SK-N-SH (cell line): ENCODE measurements at regions of chr14 and their contacts with region 1.

Region 1: DNA sequence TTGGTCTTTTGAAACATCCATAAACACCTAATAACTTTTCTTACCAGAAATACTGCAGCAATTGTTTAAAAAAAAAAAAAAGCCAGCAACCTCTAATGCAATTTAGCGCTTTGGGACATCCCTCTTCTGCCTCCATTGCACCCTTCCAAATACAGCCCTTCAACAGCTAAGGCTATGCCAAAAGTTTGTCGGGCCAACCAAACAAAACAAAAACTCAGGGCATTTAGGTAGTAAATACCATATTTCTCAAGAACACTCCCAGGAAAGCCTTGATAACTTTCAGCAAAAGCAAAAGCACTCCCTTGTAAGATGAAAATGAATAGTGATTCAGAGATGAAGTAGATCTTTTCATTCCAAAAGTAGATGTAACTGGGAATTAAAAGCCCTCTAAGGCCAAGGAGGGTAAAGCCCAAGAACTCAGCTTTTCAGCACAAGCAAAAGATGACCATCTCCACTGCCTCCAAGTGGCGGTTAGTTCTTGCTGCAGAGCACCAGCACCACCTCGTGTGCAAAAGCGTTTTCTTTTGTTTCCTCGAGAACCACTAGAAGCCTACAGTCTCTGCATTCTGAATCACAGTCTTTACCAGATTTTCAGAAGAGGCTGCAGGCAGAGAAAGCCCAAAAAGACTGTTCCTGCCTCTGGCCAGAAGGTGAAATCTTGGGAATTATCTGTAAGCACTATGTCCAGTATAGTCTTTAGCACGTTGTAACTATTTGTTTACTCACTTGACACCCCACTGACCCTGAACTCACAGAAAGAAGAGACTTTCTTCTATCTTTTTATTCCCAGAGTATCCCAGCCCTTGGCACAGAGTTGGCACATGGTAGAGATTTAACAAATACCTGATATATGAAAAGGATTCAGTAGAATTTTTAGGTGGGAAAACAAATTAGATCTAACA is 53.1 kb downstream of the SIX6 start:
- DNase-seq: peak; percentile 36
- H3K4me3 ChIP-seq: no peak overlapping the region; a peak in 1 of 4 replicates
- H3K27ac ChIP-seq: peak overlapping the region; percentile 48 to 76; a peak in 2 of 4 replicates
- H3K4me1 ChIP-seq: no peaks in the 10 kb centered on the region; a peak in 3 of 4 replicates
- H3K27me3 ChIP-seq: no peaks in the 10 kb centered on the region
- CTCF ChIP-seq: peak; percentile 67
- EP300 ChIP-seq: no peak
- RAD21 ChIP-seq: peak; percentile 88

Region 2: DNA sequence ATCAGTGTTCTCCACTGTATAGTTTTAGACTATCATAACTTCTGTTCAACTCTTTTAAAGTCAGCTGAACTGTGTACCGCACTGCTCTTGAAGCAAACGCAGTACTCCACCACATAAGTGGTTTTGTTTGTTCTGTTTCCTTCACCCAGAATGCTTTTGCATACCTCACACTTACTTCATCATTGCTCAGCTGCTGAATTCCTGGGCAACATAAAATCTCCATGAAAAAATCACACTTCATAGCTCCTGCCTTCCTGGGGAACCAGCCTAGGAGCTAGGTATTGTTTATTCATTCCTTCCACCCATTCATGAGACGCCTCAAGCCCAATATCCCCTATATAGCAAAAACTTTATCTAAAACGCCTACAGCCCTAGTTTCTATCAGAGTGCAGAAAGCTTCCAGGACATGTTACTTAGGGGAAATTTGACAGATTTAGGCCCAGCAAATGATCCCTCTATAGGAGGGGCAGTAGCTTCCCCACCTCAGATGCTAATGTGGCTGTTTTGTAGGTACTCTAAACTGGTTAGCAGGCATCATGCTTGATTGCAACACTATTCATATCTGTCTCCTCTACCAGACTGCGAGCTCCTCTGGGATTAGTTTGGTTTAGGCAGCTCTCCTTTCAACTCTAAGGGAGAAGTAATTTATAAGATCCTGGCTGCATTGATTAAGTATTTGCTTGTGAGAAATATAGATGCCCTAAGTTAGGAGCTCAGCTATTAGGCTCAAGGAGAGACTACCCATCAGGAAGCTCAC is 597.7 kb before region 1 on chr14:
- CTCF ChIA-PET with region 1: interaction called, 12 read pairs
- POLR2A ChIA-PET with region 1: no interaction called
- DNase-seq: no peak
- H3K4me3 ChIP-seq: peak overlapping the region; percentile 53 to 57; a peak in 2 of 4 replicates
- H3K27ac ChIP-seq: no peak overlapping the region
- H3K4me1 ChIP-seq: no peaks in the 10 kb centered on the region
- H3K27me3 ChIP-seq: no peaks in the 10 kb centered on the region
- CTCF ChIP-seq: no peak
- EP300 ChIP-seq: no peak
- RAD21 ChIP-seq: no peak

Region 3: GRCh38 chr14:60184146-60184904 is 377.8 kb before region 1 on chr14:
- CTCF ChIA-PET with region 1: interaction called, 21 read pairs
- POLR2A ChIA-PET with region 1: no interaction called
- DNase-seq: no peak
- H3K4me3 ChIP-seq: peak overlapping the region; percentile 40 to 61
- H3K27ac ChIP-seq: peak overlapping the region in 1 of 2 experiments; percentile 68; a peak in 2 of 4 replicates
- H3K4me1 ChIP-seq: peaks cover 6 to 8% of the 10 kb centered on the region in 2 experiments; a peak in 2 of 4 replicates
- H3K27me3 ChIP-seq: no peaks in the 10 kb centered on the region
- CTCF ChIP-seq: peak; percentile 90
- EP300 ChIP-seq: no peak
- RAD21 ChIP-seq: peak; percentile 93

Region 4: DNA sequence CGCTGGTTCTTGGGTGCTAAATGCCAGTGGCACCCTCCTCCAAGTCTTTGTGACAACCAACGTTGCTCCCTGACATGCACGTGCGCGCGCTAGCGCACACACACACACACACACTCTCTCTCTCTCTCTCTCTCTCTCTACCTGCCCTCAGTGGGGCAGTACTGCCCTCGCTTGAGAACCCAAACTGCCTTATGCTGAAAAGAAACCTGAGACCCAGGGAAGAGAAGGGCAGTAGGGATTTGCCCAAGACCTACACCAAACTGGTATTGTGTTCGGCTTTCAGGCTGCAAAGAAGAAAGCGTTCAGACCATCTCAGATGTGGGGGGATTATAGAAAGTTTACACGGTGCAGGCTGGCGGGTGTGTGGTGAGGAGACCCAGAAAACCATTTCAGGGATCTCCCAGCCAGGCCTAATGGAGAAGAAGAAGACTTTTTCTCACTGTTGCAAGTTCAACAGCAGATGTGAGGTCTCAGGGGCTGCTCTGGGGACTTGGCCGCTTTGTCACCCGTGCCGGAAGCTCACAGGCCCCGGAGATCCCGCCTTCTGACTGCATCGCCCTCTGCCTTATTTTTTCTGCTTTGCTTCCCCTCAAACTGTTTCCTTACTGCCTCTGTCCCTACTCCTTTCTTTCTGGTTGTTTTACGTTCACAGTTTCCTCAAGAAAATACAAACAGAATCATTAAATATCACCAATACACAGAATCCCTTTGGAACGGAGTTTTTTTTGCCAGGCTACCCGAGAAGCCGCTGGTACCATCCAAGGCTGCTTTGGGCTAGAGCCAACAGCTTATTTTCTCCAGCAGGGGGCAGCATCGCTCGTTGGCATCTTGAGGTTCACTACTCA is 230.7 kb before region 1 on chr14:
- CTCF ChIA-PET with region 1: interaction called, 22 read pairs
- POLR2A ChIA-PET with region 1: no interaction called
- DNase-seq: peak; percentile 73
- H3K4me3 ChIP-seq: no peak overlapping the region; a peak in 1 of 4 replicates
- H3K27ac ChIP-seq: no peak overlapping the region
- H3K4me1 ChIP-seq: no peaks in the 10 kb centered on the region; a peak in 1 of 4 replicates
- H3K27me3 ChIP-seq: no peaks in the 10 kb centered on the region; the same call in 1 of the 2 replicates
- CTCF ChIP-seq: peak; percentile 78
- EP300 ChIP-seq: no peak
- RAD21 ChIP-seq: peak; percentile 71

Region 5: GRCh38 chr14:60349663-60350365 is 212.3 kb before region 1 on chr14:
- CTCF ChIA-PET with region 1: interaction called, 37 read pairs
- POLR2A ChIA-PET with region 1: no interaction called
- DNase-seq: peak; percentile 45
- H3K4me3 ChIP-seq: no peak overlapping the region
- H3K27ac ChIP-seq: no peak overlapping the region; a peak in 1 of 4 replicates
- H3K4me1 ChIP-seq: peaks cover 0 to 6% of the 10 kb centered on the region in 2 experiments; a peak in 1 of 4 replicates
- H3K27me3 ChIP-seq: no peaks in the 10 kb centered on the region
- CTCF ChIP-seq: peak; percentile 80
- EP300 ChIP-seq: no peak
- RAD21 ChIP-seq: peak; percentile 78

Region 6: GRCh38 chr14:60508707-60509437 is 53.2 kb before region 1 on chr14 and contains the start of gene SIX6:
- CTCF ChIA-PET with region 1: interaction called, 18 read pairs
- POLR2A ChIA-PET with region 1: no interaction called
- DNase-seq: peak; percentile 77
- H3K4me3 ChIP-seq: peak within 1 kb of the TSS; percentile 38 to 41; a peak in 3 of 4 replicates
- H3K27ac ChIP-seq: no peak within 1 kb of the TSS
- H3K4me1 ChIP-seq: peaks cover 3 to 20% of the 10 kb centered on the region in 2 experiments; a peak in 1 of 4 replicates
- H3K27me3 ChIP-seq: peaks cover 85% of the 10 kb centered on the region
- CTCF ChIP-seq: no peak
- EP300 ChIP-seq: no peak
- RAD21 ChIP-seq: no peak
- polyA plus RNA-seq, gene SIX6: not detected in 2 replicates

Region 7: DNA sequence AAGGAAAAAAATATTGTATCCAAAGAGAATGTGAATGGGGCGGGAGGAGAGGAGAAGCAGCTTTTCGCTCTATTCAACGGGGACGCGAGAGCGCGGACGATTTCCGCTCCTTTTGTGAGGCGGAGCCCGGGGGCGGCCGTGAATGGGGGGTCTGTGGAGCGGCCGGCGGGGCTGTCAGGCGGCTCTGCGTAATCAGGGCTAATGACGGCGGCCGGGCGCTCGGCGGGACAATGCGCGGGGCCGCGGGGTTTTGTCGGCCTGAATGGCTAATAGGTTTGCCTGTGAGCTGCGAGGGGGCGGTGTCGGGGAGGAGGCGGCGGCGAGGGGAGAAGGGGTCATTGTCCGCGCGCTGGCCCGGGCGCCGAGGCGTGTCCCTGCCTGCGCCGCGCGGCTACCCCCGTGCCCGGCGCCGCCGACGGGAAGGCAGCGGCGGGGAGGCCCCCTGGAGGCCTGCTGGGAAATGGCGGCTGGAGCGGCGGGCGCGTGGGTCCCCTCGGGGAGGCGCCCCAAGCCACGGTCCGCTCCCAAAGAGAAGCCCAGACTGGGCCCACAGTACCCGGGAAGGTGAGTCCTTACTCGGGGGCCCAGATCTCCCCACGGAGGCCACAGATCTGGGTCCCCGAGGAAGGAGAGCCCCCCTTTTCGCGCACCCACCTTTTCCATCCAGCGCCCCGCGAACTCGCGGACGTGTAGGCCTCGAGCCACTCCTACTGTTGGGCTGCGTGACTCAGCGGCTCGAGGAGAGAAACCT is 47.2 kb before region 1 on chr14:
- CTCF ChIA-PET with region 1: interaction called, 18 read pairs
- POLR2A ChIA-PET with region 1: no interaction called
- DNase-seq: peak; percentile 90
- H3K4me3 ChIP-seq: peak overlapping the region; percentile 62 to 77
- H3K27ac ChIP-seq: no peak overlapping the region
- H3K4me1 ChIP-seq: peaks cover 0 to 9% of the 10 kb centered on the region in 2 experiments; a peak in 1 of 4 replicates
- H3K27me3 ChIP-seq: peaks cover 47% of the 10 kb centered on the region
- CTCF ChIP-seq: peak; percentile 56
- EP300 ChIP-seq: peak in 1 of 2 experiments; percentile 3; a peak in 1 of 4 replicates
- RAD21 ChIP-seq: peak; percentile 25; the same call in 1 of the 2 replicates

Region 8: DNA sequence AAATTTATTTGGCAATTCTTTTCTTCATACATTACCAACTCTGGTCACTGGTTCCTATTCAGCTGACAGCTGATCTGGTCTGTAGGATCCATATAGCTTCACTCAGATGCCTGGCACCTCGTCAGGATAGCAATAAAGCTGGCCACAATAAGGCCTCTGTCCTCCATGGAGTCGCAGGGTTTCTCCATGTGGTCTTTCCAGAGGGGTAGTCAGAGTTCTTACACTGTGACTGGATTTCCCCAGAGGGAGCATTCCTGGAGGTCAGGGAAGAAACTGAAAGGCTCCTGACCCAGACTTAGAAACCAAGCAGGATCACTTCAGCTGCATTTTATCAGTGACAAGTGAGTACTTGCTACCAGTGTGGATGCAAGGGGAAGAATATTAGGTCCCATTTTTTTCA is 122.1 kb after region 1 on chr14:
- CTCF ChIA-PET with region 1: no interaction called
- POLR2A ChIA-PET with region 1: no interaction called
- DNase-seq: no peak
- H3K4me3 ChIP-seq: no peak overlapping the region
- H3K27ac ChIP-seq: no peak overlapping the region
- H3K4me1 ChIP-seq: no peaks in the 10 kb centered on the region
- H3K27me3 ChIP-seq: no peaks in the 10 kb centered on the region
- CTCF ChIP-seq: no peak
- EP300 ChIP-seq: no peak
- RAD21 ChIP-seq: no peak